Naive thymus-derived CD4-positive, alpha-beta T cell (primary cell): ENCODE measurements at regions of chr11 and their contacts with region 1.

Region 1: GRCh38 chr11:69337211-69337721 is 43.3 kb downstream of the MYEOV start:
- DNase-seq: peak in 8 of 9 donors; percentile 29 to 65 (median 46)
- ATAC-seq: peak; percentile 81
- H3K4me3 ChIP-seq: peak overlapping the region; percentile 28
- H3K4me3 Mint-ChIP-seq: peak overlapping the region; percentile 49 to 80 (median 72)
- H3K27ac ChIP-seq: peak overlapping the region; percentile 66
- H3K27ac Mint-ChIP-seq: peak overlapping the region; percentile 76 to 94 (median 88)
- H3K4me1 ChIP-seq: peaks cover 12 to 28% of the 10 kb centered on the region in 2 donors
- H3K4me1 Mint-ChIP-seq: peaks cover 21 to 53% (median 42%) of the 10 kb centered on the region in 7 donors
- H3K27me3 ChIP-seq: no peaks in the 10 kb centered on the region
- H3K27me3 Mint-ChIP-seq: peaks cover 0 to under 1% (median 0%) of the 10 kb centered on the region in 5 donors

Region 2: GRCh38 chr11:69311767-69312385 is 25.4 kb before region 1 on chr11:
- CTCF ChIA-PET with region 1: no interaction called
- POLR2A ChIA-PET with region 1: interaction called, 6 read pairs
- intact Hi-C with region 1: loop called in 1 of 2 experiments (anchors 2 kb)
- DNase-seq: peak in 7 of 9 donors; percentile 30 to 53 (median 49)
- ATAC-seq: peak; percentile 62
- H3K4me3 ChIP-seq: peak overlapping the region; percentile 43
- H3K4me3 Mint-ChIP-seq: peak overlapping the region; percentile 56 to 81 (median 75)
- H3K27ac ChIP-seq: peak overlapping the region; percentile 55
- H3K27ac Mint-ChIP-seq: peak overlapping the region; percentile 55 to 91 (median 79)
- H3K4me1 ChIP-seq: peaks cover 23 to 27% of the 10 kb centered on the region in 2 donors
- H3K4me1 Mint-ChIP-seq: peaks cover 18 to 48% (median 43%) of the 10 kb centered on the region in 7 donors
- H3K27me3 ChIP-seq: no peaks in the 10 kb centered on the region
- H3K27me3 Mint-ChIP-seq: no peaks in the 10 kb centered on the region

Region 3: DNA sequence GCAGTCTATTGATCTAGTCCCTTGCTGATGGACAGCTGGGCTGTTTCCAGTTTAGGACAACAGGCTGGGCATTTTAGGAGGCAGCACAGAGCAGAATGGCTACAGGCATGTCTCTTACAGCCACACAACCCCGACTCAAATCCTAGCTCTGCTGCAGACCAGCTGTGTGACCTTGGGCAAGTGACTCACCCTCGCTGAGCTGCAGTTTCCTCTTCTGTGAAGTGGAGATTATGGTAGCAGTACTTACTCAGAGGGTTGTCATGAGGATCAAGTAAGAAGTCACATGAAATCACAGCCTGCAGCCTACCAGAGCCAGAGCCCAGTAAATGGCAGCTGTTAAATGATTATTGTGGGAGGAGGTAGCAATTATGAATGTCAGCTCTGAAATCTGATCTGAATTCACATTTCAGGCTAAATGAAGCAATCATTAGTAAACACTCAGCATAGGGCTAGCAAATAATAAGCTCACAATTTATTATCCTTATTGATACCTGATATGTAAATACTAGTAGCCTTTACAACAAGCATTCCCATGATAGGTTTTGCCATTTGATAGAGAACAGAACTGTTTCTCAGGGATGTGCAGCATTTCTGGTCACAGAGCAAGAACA is 15.6 kb after region 1 on chr11:
- CTCF ChIA-PET with region 1: no interaction called
- POLR2A ChIA-PET with region 1: no interaction called
- intact Hi-C with region 1: no loop called
- DNase-seq: peak in 1 of 9 donors; percentile 40
- ATAC-seq: peak; percentile 52
- H3K4me3 ChIP-seq: no peak overlapping the region
- H3K4me3 Mint-ChIP-seq: no peak overlapping the region
- H3K27ac ChIP-seq: no peak overlapping the region
- H3K27ac Mint-ChIP-seq: no peak overlapping the region
- H3K4me1 ChIP-seq: no peaks in the 10 kb centered on the region
- H3K4me1 Mint-ChIP-seq: peaks cover 0 to 6% (median 0%) of the 10 kb centered on the region in 7 donors
- H3K27me3 ChIP-seq: no peaks in the 10 kb centered on the region
- H3K27me3 Mint-ChIP-seq: peaks cover 0 to 6% (median 2%) of the 10 kb centered on the region in 5 donors